WTC11 (cell line): ENCODE measurements at regions of chr6 and their contacts with region 1.

Region 1: DNA sequence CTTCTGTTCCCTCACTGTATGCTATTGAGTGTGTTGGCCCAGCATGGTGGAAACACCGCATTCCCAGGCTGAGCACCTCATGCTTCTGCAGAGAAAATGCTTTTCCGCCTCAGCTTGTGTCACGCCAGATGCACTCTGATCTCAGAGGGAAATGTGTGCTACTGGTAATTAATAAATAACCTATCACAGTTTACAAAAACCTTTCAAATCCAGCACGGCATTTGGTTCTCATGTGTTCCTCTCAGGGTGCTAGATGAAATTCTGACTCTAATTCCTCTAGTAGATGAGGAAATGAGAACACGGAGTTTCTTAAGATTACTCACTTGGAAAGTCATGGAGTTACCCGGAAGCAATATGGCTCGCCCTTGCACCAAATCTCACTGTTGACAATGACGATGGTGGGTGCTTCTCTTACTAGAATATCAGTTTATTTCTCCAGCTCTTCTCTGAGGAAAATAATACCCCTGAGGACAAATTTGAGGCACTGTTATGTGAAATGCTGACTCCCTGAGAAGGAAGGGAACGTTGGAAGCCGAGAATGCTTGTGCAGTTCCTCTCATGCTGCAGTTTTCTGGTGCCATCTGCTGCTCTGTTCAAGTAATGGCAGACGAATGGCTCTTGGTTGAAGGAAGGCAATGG is 116.6 kb downstream of the RNF144B start:
- DNase-seq: peak; percentile 53
- ATAC-seq: peak; percentile 89
- H3K4me3 Mint-ChIP-seq: no peak overlapping the region
- H3K27ac Mint-ChIP-seq: no peak overlapping the region
- H3K4me1 Mint-ChIP-seq: peaks cover 15% of the 10 kb centered on the region
- H3K27me3 Mint-ChIP-seq: no peaks in the 10 kb centered on the region
- CTCF ChIP-seq: peak; percentile 63

Region 2: GRCh38 chr6:18327626-18328025 is 176.1 kb before region 1 on chr6:
- CTCF ChIA-PET with region 1: interaction called, 15 read pairs
- POLR2A ChIA-PET with region 1: no interaction called
- DNase-seq: peak; percentile 57
- ATAC-seq: peak; percentile 81
- H3K4me3 Mint-ChIP-seq: no peak overlapping the region
- H3K27ac Mint-ChIP-seq: no peak overlapping the region
- H3K4me1 Mint-ChIP-seq: peaks cover 39% of the 10 kb centered on the region
- H3K27me3 Mint-ChIP-seq: no peaks in the 10 kb centered on the region
- CTCF ChIP-seq: no peak